Transverse colon (tissue), 4 donors: ENCODE measurements at regions of chr4 and their contacts with region 1.

Region 1: GRCh38 chr4:112451831-112452230 is 64.1 kb downstream of the NEUROG2 start:
- DNase-seq: no peak
- H3K4me3 ChIP-seq: no peak overlapping the region
- H3K27ac ChIP-seq: no peak overlapping the region
- H3K4me1 ChIP-seq: no peaks in the 10 kb centered on the region
- H3K27me3 ChIP-seq: no peaks in the 10 kb centered on the region
- CTCF ChIP-seq: no peak
- EP300 ChIP-seq: no peak
- POLR2A ChIP-seq: no peak

Region 2: GRCh38 chr4:111283061-111283677 is 1168.7 kb before region 1 on chr4:
- in situ Hi-C with region 1: no loop called
- intact Hi-C with region 1: loop called (anchors 5 kb)
- DNase-seq: peak; percentile 70
- H3K4me3 ChIP-seq: no peak overlapping the region
- H3K27ac ChIP-seq: no peak overlapping the region
- H3K4me1 ChIP-seq: peaks cover 0 to 3% (median 0%) of the 10 kb centered on the region in 4 donors
- H3K27me3 ChIP-seq: peaks cover 5% of the 10 kb centered on the region
- CTCF ChIP-seq: peak; percentile 66 to 78 (median 71)
- EP300 ChIP-seq: no peak
- POLR2A ChIP-seq: no peak

Region 3: GRCh38 chr4:112189754-112190153 is 262.1 kb before region 1 on chr4:
- in situ Hi-C with region 1: no loop called
- intact Hi-C with region 1: no loop called
- DNase-seq: no peak
- H3K4me3 ChIP-seq: no peak overlapping the region
- H3K27ac ChIP-seq: no peak overlapping the region
- H3K4me1 ChIP-seq: no peaks in the 10 kb centered on the region
- H3K27me3 ChIP-seq: no peaks in the 10 kb centered on the region
- CTCF ChIP-seq: peak in 1 of 5 experiments; percentile 12
- EP300 ChIP-seq: no peak
- POLR2A ChIP-seq: no peak